PC-9 (cell line): ENCODE measurements at regions of chr2 and their contacts with region 1.

Region 1: DNA sequence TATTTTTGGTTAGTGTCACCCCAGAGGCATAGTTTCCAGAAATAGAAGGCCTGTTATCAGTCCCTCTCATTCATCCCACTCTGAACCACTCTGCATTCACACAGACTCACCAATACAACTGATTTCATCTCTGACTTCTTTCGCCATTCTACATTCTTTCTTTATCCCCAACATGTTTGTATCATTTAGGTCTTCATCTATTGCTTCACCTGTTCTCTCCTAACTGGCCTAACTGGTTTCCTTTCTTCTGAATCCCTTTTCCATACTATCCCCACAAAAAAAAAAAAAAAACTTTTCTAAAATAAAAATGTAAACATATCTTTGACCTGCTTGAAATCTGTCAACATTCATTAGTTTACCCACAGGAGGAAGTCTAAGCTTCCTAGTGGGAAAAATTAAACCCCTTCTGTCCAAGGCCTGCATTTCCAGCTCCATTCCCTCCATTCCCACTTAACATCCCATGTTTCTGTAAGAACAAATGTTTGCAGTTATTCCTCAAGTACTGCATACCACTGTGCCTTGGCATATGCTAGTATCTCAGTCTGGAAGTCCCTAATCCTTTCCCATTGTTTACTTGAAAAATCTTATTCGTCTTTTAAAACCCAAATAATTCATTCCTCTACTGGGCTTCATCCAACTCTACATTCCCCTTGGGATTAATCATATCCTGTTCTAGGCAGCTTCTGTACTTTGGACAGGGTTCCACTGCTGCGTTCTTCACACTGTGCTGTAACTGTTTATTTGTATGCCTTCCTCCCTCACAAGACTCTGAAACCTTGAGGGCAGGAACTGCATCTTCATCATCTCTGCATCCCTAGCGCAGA is 68.5 kb downstream of the FIGN start:
- DNase-seq: peak; percentile 19 to 71
- H3K4me3 ChIP-seq: no peak overlapping the region
- H3K27ac ChIP-seq: peak overlapping the region; percentile 25; the same call in 1 of the 2 replicates
- H3K4me1 ChIP-seq: peaks cover 29% of the 10 kb centered on the region
- H3K27me3 ChIP-seq: no peaks in the 10 kb centered on the region
- CTCF ChIP-seq: no peak

Region 2: DNA sequence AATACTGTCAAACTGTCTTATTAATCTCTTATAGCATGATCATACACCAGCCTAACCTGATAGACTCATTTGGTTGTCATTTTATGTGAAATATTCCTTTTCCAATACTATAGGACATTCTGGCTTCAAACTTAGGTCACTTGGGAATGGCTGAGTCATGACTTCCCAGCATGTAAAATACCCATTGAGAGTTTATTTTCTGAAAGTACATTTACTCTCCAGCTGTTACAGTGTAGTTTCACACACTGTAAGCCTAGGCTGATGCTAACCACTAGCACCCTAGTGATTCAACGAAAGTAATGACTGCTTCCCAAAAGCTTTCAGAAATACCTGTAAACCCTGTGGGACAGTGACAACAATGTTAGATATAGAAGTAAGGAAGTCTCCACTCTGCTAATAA is 25.3 kb before region 1 on chr2:
- CTCF ChIA-PET with region 1: no interaction called
- POLR2A ChIA-PET with region 1: interaction called, 22 read pairs
- intact Hi-C with region 1: no loop called
- DNase-seq: no peak
- H3K4me3 ChIP-seq: no peak overlapping the region
- H3K27ac ChIP-seq: no peak overlapping the region
- H3K4me1 ChIP-seq: no peaks in the 10 kb centered on the region
- H3K27me3 ChIP-seq: no peaks in the 10 kb centered on the region
- CTCF ChIP-seq: no peak

Region 3: DNA sequence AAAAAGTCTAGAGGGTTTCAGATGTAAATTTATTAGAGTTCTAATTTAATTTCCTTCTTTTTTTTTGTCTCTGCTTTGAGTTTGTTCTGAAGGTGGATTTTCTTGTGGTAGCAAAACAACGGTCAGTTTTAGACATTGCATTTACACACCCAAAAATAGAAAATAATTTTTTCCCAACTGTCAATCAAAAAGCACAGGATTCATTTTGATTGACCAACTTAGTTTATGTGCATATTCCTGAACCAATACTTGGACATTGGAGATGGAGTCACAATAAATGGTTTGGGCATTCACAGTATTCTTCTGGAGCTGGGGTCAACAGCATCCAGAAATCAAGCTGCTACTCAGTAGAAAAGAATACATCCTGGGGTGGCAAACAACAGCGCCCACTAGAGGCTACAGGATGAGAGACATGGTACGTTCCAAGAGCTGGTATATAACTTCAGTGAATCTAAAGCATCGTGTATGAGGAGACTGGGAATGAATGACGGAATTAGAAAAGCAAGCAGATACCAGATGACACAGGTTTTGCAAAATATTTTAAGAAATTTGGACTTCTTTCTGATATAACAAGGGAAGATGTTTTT is 211.3 kb after region 1 on chr2:
- CTCF ChIA-PET with region 1: no interaction called
- POLR2A ChIA-PET with region 1: no interaction called
- intact Hi-C with region 1: loop called (anchors 5 kb)
- DNase-seq: peak in 1 of 2 experiments; percentile 1
- H3K4me3 ChIP-seq: no peak overlapping the region
- H3K27ac ChIP-seq: no peak overlapping the region
- H3K4me1 ChIP-seq: no peaks in the 10 kb centered on the region
- H3K27me3 ChIP-seq: no peaks in the 10 kb centered on the region
- CTCF ChIP-seq: peak; percentile 47; the same call in 1 of the 2 replicates